Mammary epithelial cell (primary cell): ENCODE measurements at regions of chr7 and their contacts with region 1.

Region 1: GRCh38 chr7:42730586-42730985 is 181.3 kb downstream of the C7orf25 start:
- DNase-seq: no peak
- H3K4me3 ChIP-seq: no peak overlapping the region
- H3K27ac ChIP-seq: no peak overlapping the region
- H3K4me1 ChIP-seq: no peaks in the 10 kb centered on the region
- H3K27me3 ChIP-seq: no peaks in the 10 kb centered on the region
- CTCF ChIP-seq: no peak

Region 2: DNA sequence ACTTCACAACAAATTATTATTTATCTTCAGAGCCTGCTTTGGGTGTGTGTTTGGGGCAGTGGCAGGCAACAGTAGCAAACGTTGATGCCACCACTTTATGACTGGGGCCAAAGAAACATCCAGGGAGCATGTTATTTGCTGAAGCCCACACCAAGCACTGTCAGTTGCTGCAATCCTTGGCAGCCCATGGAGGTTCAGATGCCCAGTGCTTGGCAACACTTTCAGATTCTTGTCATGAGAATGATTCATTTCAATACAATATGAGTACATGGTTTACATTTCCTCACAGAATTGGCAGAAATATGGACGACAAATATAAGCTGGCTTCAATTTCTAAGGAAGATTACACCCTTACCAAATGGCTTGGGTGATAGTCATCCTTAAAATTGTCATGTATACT is 447.0 kb before region 1 on chr7:
- CTCF ChIA-PET with region 1: interaction called, 11 read pairs
- dilution Hi-C with region 1: no loop called
- in situ Hi-C with region 1: no loop called
- intact Hi-C with region 1: no loop called
- DNase-seq: peak; percentile 42
- H3K4me3 ChIP-seq: no peak overlapping the region
- H3K27ac ChIP-seq: no peak overlapping the region
- H3K4me1 ChIP-seq: no peaks in the 10 kb centered on the region
- H3K27me3 ChIP-seq: no peaks in the 10 kb centered on the region
- CTCF ChIP-seq: no peak